Psoas muscle (tissue), 8 donors: ENCODE measurements at regions of chr17 and their contacts with region 1.

Region 1: GRCh38 chr17:68759343-68760132 is 158.4 kb upstream of the FAM20A start:
- DNase-seq: peak; percentile 86 to 91
- ATAC-seq: peak; percentile 98 to 99 (median 98)
- H3K4me3 ChIP-seq: peak overlapping the region; percentile 60
- H3K27ac ChIP-seq: peak overlapping the region; percentile 89
- H3K4me1 ChIP-seq: no peaks in the 10 kb centered on the region
- H3K27me3 ChIP-seq: no peaks in the 10 kb centered on the region
- CTCF ChIP-seq: peak; percentile 85

Region 2: DNA sequence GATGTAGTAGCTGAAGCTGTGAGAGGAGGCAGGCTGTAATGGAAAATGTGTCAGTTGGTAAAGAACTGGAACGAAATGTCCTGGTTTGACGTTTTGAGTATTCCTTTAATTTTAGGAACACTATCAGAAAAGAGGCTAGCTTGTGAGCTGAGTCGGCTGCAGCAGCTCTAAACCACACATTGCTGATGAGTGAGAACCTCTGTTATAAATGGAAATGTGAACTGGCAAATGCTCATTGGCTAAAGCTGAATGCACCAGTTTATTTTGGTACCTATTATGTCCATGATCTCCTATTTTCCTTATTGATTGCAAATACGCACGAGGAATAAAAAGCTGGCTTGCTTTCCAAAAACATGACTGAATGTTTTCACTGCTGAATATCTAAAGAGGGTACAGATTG is 291.2 kb before region 1 on chr17:
- intact Hi-C with region 1: loop called in 1 of 2 experiments (anchors 5 kb)
- DNase-seq: no peak
- ATAC-seq: peak; percentile 48 to 83 (median 60)
- H3K4me3 ChIP-seq: no peak overlapping the region
- H3K27ac ChIP-seq: peak overlapping the region; percentile 82
- H3K4me1 ChIP-seq: peaks cover 6% of the 10 kb centered on the region
- H3K27me3 ChIP-seq: no peaks in the 10 kb centered on the region
- CTCF ChIP-seq: no peak

Region 3: GRCh38 chr17:68539548-68540467 is 219.7 kb before region 1 on chr17:
- intact Hi-C with region 1: loop called in 1 of 2 experiments (anchors 5 kb)
- DNase-seq: no peak
- ATAC-seq: peak; percentile 8 to 24 (median 10)
- H3K4me3 ChIP-seq: no peak overlapping the region
- H3K27ac ChIP-seq: peak overlapping the region; percentile 48
- H3K4me1 ChIP-seq: peaks cover 16% of the 10 kb centered on the region
- H3K27me3 ChIP-seq: no peaks in the 10 kb centered on the region
- CTCF ChIP-seq: no peak